B cell (primary cell): ENCODE measurements at regions of chr16 and their contacts with region 1.

Region 1: GRCh38 chr16:23149349-23149996 is at the start of gene USP31:
- DNase-seq: peak; percentile 92
- ATAC-seq: peak; percentile 96
- H3K4me3 ChIP-seq: peak within 1 kb of the TSS; percentile 44 to 90 (median 71)
- H3K4me3 Mint-ChIP-seq: peak within 1 kb of the TSS; percentile 96
- H3K27ac ChIP-seq: peak within 1 kb of the TSS in 1 of 2 donors; percentile 28
- H3K27ac Mint-ChIP-seq: peak within 1 kb of the TSS; percentile 84
- H3K4me1 ChIP-seq: peaks cover 8 to 9% of the 10 kb centered on the region in 2 donors
- H3K4me1 Mint-ChIP-seq: peaks cover 14% of the 10 kb centered on the region
- H3K27me3 ChIP-seq: peaks cover 0 to 6% (median 0%) of the 10 kb centered on the region in 4 experiments
- H3K27me3 Mint-ChIP-seq: peaks cover 5% of the 10 kb centered on the region
- CTCF ChIP-seq: no peak
- total RNA-seq, gene USP31: 5.6 and 6.7 TPM in 2 replicates

Region 2: GRCh38 chr16:23119570-23119969 is 29.9 kb before region 1 on chr16:
- CTCF ChIA-PET with region 1: no interaction called
- POLR2A ChIA-PET with region 1: no interaction called
- intact Hi-C with region 1: no loop called
- DNase-seq: no peak
- ATAC-seq: no peak
- H3K4me3 ChIP-seq: no peak overlapping the region
- H3K4me3 Mint-ChIP-seq: no peak overlapping the region
- H3K27ac ChIP-seq: no peak overlapping the region
- H3K27ac Mint-ChIP-seq: no peak overlapping the region
- H3K4me1 ChIP-seq: no peaks in the 10 kb centered on the region
- H3K4me1 Mint-ChIP-seq: no peaks in the 10 kb centered on the region
- H3K27me3 ChIP-seq: no peaks in the 10 kb centered on the region
- H3K27me3 Mint-ChIP-seq: no peaks in the 10 kb centered on the region
- CTCF ChIP-seq: no peak

Region 3: DNA sequence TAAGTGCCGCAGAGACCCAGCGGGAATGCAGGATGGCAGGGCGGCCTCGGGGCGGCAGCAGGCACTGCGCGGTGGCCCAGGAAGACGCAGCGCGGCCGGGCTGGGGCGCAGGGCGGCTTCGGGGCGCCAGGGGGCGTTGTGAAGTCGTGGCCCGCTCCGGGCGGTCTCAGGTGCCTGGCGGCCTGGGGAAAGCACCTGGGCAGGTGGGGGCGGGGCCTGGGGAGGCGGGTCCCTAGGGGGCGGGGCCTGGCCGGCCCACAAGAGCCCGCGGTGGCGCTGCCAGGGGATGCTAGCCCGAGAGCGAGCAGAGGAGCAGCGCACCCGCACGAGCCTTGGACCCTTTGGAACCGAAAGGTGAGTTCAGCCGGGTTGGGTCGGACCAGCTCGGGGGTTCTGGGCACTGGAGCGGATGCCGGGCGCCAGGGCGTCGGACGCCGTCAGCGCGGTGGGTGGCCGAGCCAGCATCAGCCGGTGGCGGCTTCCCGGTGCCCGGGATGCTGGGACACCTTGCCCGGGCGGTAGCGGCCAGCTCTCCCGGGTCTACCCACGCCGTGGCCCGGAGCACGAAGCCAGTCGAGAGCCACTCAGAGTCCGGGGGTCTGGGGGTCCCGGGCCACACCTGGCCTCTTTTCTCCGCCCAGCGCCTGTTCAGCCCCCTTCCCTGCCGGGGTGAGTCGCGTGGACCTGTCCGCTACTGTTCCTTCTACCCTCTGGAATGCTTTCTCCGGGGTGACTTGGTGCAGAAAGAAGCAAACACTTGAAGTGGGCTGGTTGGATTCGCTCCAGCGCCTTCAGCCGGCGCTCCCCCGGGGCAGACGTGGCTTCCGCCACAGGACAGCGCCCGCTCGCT is 33.2 kb after region 1 on chr16 and contains the start of gene SCNN1G:
- CTCF ChIA-PET with region 1: interaction called, 5 read pairs
- POLR2A ChIA-PET with region 1: no interaction called
- intact Hi-C with region 1: loop called (anchors 1 kb)
- DNase-seq: peak; percentile 89
- ATAC-seq: peak; percentile 96
- H3K4me3 ChIP-seq: peak within 1 kb of the TSS in 4 of 5 experiments; percentile 19 to 63 (median 42)
- H3K4me3 Mint-ChIP-seq: peak within 1 kb of the TSS; percentile 82
- H3K27ac ChIP-seq: no peak within 1 kb of the TSS
- H3K27ac Mint-ChIP-seq: no peak within 1 kb of the TSS
- H3K4me1 ChIP-seq: peaks cover 19 to 24% of the 10 kb centered on the region in 2 donors
- H3K4me1 Mint-ChIP-seq: peaks cover 11% of the 10 kb centered on the region
- H3K27me3 ChIP-seq: peaks cover 0 to 48% (median 31%) of the 10 kb centered on the region in 4 experiments
- H3K27me3 Mint-ChIP-seq: peaks cover 46% of the 10 kb centered on the region
- CTCF ChIP-seq: peak; percentile 89
- total RNA-seq, gene SCNN1G: not detected in 2 replicates